Common myeloid progenitor, CD34-positive (primary cell): ENCODE measurements at regions of chr17 and their contacts with region 1.

Region 1: DNA sequence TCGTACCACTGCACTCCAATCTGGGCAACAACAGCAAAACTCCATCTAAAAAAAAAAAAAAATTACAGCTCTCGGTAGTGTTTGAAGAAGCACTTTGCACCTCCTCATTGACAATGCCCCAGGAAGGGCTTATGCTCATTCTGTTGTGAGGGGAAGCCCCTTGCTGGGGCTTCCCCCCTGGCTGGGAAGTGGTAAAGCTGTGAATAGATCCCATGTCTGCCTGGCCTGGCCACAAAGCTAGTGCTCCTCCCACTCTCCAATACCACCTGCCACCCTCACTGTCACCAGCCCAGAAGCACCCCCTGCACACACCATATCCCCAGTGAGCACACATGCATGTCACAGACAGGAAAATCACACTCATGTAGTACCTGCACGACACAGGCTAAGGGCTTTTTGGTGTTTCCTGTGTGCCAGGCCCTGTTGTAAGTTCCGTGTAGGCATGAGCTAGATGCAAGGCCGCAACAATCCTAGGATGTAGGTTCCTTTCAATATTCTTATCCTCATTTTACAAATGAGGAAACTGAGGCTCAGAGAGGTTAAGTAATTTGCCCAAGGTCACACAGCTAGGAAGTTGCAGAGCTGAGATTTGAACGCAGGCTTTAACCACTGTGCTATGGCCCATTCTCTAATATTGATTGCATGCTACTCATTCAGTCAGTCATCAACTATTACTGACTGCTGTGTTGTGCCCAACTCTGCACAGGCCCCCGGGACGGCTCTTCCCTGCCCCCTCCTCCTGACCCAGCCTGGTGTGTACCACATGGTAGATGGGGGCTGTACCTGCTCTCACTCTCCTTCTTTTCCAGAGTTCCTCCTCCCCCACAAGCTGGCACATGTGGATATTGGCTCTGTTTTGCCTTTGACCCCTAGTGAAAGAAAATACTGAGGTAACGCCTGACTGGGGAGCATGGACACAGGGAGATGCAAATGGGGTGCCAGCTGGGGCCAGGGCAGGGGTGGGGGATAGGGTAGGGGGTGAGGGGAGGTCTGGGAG is 11.9 kb upstream of the COL1A1 start:
- DNase-seq: peak; percentile 46 to 87 (median 87)
- H3K4me3 ChIP-seq: no peak overlapping the region
- H3K27ac ChIP-seq: no peak overlapping the region
- H3K4me1 ChIP-seq: peaks cover 0 to 12% (median 5%) of the 10 kb centered on the region in 4 experiments
- H3K27me3 ChIP-seq: peaks cover 0 to 11% (median 0%) of the 10 kb centered on the region in 5 experiments

Region 2: DNA sequence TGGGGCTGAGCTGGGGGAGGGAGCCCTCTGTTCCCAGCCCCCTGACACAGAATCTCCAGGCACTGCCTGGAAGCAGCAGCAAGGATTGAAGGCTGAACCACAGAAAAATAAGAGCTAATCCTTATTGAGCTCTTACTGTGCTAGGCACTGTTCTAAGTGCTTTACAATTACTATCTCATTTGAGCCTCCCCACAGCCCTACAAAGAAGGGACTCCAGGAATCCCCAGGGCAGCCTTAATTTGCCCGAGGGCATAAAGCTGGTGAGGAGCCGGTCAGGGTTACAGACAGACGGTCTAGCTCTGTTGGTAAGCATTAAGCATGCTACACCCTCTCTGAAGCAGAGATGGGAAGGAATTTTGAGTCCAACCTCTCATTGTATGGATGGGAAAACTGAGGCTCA is 90.4 kb before region 1 on chr17:
- CTCF ChIA-PET with region 1: no interaction called
- POLR2A ChIA-PET with region 1: no interaction called
- DNase-seq: no peak
- H3K4me3 ChIP-seq: no peak overlapping the region
- H3K27ac ChIP-seq: no peak overlapping the region
- H3K4me1 ChIP-seq: peaks cover 3 to 17% (median 10%) of the 10 kb centered on the region in 4 experiments
- H3K27me3 ChIP-seq: peaks cover 0 to 3% (median 0%) of the 10 kb centered on the region in 5 experiments

Region 3: GRCh38 chr17:50162466-50163254 is 50.7 kb before region 1 on chr17:
- CTCF ChIA-PET with region 1: no interaction called
- POLR2A ChIA-PET with region 1: no interaction called
- DNase-seq: no peak
- H3K4me3 ChIP-seq: no peak overlapping the region
- H3K27ac ChIP-seq: no peak overlapping the region
- H3K4me1 ChIP-seq: peaks cover 9 to 32% (median 26%) of the 10 kb centered on the region in 4 experiments
- H3K27me3 ChIP-seq: no peaks in the 10 kb centered on the region

Region 4: GRCh38 chr17:50269477-50270434 is 56.4 kb after region 1 on chr17:
- CTCF ChIA-PET with region 1: interaction called, 184 read pairs
- POLR2A ChIA-PET with region 1: no interaction called
- DNase-seq: peak; percentile 53 to 74 (median 58)
- H3K4me3 ChIP-seq: no peak overlapping the region
- H3K27ac ChIP-seq: no peak overlapping the region
- H3K4me1 ChIP-seq: peaks cover 0 to 67% (median 53%) of the 10 kb centered on the region in 4 experiments
- H3K27me3 ChIP-seq: peaks cover 0 to 6% (median 0%) of the 10 kb centered on the region in 5 experiments